Right ventricle myocardium inferior (tissue), 1 donor: ENCODE measurements at regions of chr2 and their contacts with region 1.

Region 1: DNA sequence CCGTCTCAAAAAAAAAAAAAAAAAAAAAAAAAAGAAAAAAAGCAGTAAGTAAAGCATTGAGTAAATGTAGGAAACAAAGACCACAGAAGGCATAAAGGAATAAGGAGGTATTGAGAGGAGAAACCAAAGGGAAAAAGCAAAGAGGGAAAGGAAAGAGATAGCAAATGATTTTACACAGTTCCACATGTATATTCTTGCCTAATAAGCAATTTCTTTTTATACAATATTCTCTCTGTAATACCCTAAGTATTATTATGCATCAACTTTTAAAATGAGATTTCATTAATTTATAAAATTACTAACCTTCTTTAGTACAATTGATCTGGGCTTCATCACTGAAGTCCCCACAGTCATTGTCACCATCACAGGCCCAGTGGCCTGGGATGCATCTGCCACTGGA is 1180.9 kb downstream of the LRP1B start:
- DNase-seq: no peak
- ATAC-seq: no peak

Region 2: DNA sequence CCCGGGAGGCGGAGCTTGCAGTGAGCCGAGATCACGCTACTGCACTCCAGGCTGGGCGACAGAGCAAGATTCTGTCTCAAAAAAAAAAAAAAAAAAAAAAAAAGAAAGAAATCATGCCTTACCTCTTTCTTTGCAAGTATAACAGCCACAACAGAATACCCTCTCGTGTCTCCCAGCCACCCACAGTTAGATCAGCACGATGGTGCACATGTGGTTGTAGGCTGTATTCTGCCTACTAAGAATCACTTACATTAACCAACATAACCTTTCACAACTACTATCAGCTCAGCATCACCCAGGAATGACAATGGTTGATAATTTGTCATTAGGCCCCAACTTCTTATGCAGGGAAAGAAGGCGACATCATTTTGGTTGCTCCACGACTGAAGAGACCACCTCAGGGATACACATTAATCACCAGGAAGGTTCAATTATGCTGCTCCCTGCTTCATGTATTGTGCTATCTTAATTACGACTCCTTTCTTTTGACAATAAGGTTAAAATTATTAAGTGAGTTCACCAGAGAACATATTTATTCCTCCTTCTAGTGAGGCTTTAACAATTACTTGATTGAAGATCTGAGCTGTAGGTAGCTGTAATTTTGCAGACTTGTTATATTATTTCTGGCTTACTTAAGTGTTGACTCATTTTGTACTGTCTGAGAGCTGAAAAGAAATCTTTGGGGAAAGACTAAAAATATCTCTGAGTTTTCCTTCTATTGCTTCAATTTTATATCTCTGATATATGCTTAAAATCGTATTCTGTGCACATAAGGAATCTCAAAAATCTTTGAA is 1060.7 kb after region 1 on chr2:
- intact Hi-C with region 1: loop called (anchors 10 kb)
- DNase-seq: no peak
- ATAC-seq: no peak